Activated T-helper 2 cell treated with anti-CD3 and anti-CD28 coated beads, Interferon-gamma antibody, Interleukin-2, Interleukin-4, amounts not matched to agents 10 μg/mL and 5 μg/mL and 100 μg/mL, durations not matched to agents 14 hours and 24 hours and 36 hours (primary cell): ENCODE measurements at regions of chr3 and their contacts with region 1.

Region 1: DNA sequence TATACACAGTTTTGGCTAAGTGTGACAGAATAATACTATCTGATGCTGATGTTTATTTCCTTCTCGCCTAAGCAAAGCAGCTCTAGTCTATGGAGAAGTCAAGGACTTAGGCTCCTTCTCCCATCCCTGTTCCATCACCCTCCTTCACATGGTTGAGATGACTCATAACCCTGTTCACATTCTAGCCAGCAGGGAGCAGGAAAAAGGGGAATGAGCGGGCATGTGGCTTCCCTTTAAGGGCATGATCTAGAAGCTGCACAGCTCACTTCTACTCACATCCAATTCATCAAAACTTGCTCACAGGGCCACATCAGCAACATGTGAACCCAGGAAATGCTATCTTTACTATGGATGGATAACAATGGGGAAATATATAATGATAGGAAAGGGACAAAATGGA is 40.9 kb downstream of the CBLB start:
- DNase-seq: no peak
- H3K4me3 Mint-ChIP-seq: peak overlapping the region; percentile 37
- H3K27ac Mint-ChIP-seq: peak overlapping the region; percentile 100
- H3K4me1 Mint-ChIP-seq: peaks cover 80% of the 10 kb centered on the region
- H3K27me3 Mint-ChIP-seq: no peaks in the 10 kb centered on the region

Region 2: DNA sequence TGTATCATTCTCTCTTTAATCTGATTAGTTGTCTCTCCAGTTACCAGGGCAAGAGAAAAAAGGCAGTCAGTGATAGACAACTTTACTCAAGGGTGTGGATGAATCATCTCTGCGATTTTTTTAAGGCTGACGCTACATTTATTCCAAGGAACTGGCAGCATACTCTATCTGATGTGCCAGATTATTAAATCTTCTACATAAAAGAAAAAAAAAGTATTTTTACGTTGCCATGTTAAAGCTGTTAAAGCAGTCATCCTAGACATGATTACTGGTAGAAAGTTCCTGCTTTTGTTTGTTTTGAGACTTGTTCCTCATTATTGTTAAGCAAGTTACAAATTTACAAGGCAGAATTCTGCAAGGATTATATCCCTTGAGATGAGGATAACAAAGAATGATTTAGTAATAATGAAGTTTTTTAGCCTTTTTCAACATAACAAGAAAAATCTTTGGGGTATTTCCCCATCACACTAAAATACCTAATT is 80.9 kb before region 1 on chr3:
- intact Hi-C with region 1: loop called (anchors 1 kb)
- DNase-seq: no peak
- H3K4me3 Mint-ChIP-seq: no peak overlapping the region
- H3K27ac Mint-ChIP-seq: peak overlapping the region; percentile 88
- H3K4me1 Mint-ChIP-seq: peaks cover 64% of the 10 kb centered on the region
- H3K27me3 Mint-ChIP-seq: no peaks in the 10 kb centered on the region

Region 3: DNA sequence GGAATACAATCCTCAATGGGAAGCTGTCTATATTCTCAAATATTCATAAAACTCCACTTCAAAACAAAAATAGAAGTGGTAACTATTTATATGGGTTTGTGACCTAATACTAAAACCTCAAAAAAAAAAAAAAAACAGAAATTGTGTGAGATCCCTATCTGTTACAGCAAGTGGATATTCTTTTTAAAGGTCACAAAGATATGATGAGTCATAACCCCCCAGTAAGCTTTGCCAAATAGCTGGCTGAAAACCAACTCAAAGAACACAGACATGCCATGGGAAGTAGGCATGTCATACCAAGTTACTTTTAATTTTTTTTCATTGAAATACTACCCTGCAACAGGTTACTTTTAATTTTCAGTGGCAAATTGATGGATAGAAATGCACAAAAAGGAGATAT is 21.6 kb before region 1 on chr3:
- intact Hi-C with region 1: loop called (anchors 1 kb)
- DNase-seq: no peak
- H3K4me3 Mint-ChIP-seq: no peak overlapping the region
- H3K27ac Mint-ChIP-seq: peak overlapping the region; percentile 68
- H3K4me1 Mint-ChIP-seq: peaks cover 66% of the 10 kb centered on the region
- H3K27me3 Mint-ChIP-seq: no peaks in the 10 kb centered on the region

Region 4: GRCh38 chr3:106119614-106120082 is 291.7 kb after region 1 on chr3:
- intact Hi-C with region 1: loop called (anchors 1 kb)
- DNase-seq: no peak
- H3K4me3 Mint-ChIP-seq: no peak overlapping the region
- H3K27ac Mint-ChIP-seq: peak overlapping the region; percentile 80
- H3K4me1 Mint-ChIP-seq: peaks cover 23% of the 10 kb centered on the region
- H3K27me3 Mint-ChIP-seq: no peaks in the 10 kb centered on the region

Region 5: GRCh38 chr3:106428565-106428994 is 600.6 kb after region 1 on chr3:
- intact Hi-C with region 1: loop called (anchors 2 kb)
- DNase-seq: no peak
- H3K4me3 Mint-ChIP-seq: no peak overlapping the region
- H3K27ac Mint-ChIP-seq: peak overlapping the region; percentile 93
- H3K4me1 Mint-ChIP-seq: peaks cover 44% of the 10 kb centered on the region
- H3K27me3 Mint-ChIP-seq: no peaks in the 10 kb centered on the region